ENCODE measurements at regions of chr16 and their contacts with region 1.

Region 1: DNA sequence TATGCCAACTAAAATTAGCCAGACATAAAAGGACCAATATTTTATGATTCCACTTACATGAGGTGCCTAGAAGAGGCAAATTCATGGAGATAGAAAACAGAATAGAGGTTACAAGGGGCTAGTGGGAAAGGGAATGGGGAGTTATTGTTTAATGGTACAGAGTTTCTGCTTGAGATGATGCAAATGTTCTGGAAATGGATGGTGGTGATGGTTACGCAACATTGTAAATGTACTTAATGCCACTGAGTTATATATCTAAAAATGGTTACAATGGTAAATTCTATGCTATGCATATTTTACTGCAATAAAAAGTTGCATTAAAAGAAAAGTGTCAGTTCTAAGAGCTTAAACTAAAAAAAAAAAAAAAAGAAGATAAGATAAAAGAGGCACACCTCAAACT is 17.9 kb downstream of the MT1X start:
- DNase-seq: no peak
- ATAC-seq: no peak
- H3K4me3 ChIP-seq: no peak overlapping the region
- H3K27ac ChIP-seq: no peak overlapping the region
- H3K4me1 ChIP-seq: no peaks in the 10 kb centered on the region; the same call in 1 of the 2 replicates
- H3K27me3 ChIP-seq: no peaks in the 10 kb centered on the region; a peak in 2 of 4 replicates
- CTCF ChIP-seq: no peak
- EP300 ChIP-seq: no peak
- POLR2A ChIP-seq: no peak
- RAD21 ChIP-seq: no peak

Region 2: DNA sequence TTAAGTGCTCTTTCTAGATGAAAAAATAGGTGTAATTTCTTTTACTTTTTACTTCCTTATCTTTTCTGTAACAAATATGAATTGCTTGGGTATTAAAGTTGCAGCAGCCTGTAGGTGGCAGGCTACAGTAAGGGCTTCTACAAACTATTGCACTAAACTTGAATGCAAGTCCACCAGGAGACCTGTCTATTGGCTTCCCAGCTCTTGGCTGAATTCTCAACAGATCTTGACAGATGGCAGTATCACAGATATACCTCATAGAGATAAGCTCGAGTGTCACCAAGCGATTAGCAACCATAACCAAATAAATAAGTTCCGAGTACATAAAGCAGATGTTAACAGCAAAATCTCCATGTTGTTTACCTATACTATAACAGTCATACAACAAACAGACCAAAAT is 186.2 kb before region 1 on chr16:
- CTCF ChIA-PET with region 1: interaction called, 27 read pairs
- POLR2A ChIA-PET with region 1: no interaction called
- RAD21 ChIA-PET with region 1: interaction called, 10 read pairs
- SMC1A ChIA-PET with region 1: interaction called, 27 read pairs
- in situ Hi-C with region 1: loop called (anchors 5 kb)
- intact Hi-C with region 1: loop called (anchors 1 kb)
- DNase-seq: peak; percentile 4
- ATAC-seq: peak; percentile 95
- H3K4me3 ChIP-seq: no peak overlapping the region
- H3K27ac ChIP-seq: no peak overlapping the region
- H3K4me1 ChIP-seq: no peaks in the 10 kb centered on the region; the same call in 1 of the 2 replicates
- H3K27me3 ChIP-seq: no peaks in the 10 kb centered on the region
- CTCF ChIP-seq: peak; percentile 56 to 66 (median 64)
- EP300 ChIP-seq: no peak
- POLR2A ChIP-seq: no peak
- RAD21 ChIP-seq: peak; percentile 53

Region 3: GRCh38 chr16:56576585-56577293 is 123.5 kb before region 1 on chr16:
- CTCF ChIA-PET with region 1: interaction called, 90 read pairs
- POLR2A ChIA-PET with region 1: no interaction called
- RAD21 ChIA-PET with region 1: interaction called, 66 read pairs
- SMC1A ChIA-PET with region 1: interaction called, 67 read pairs
- in situ Hi-C with region 1: loop called (anchors 5 kb)
- intact Hi-C with region 1: loop called (anchors 1 kb)
- DNase-seq: peak; percentile 32
- ATAC-seq: peak; percentile 100
- H3K4me3 ChIP-seq: no peak overlapping the region
- H3K27ac ChIP-seq: no peak overlapping the region
- H3K4me1 ChIP-seq: no peaks in the 10 kb centered on the region
- H3K27me3 ChIP-seq: no peaks in the 10 kb centered on the region
- CTCF ChIP-seq: peak; percentile 89 to 96 (median 95)
- EP300 ChIP-seq: no peak
- POLR2A ChIP-seq: no peak
- RAD21 ChIP-seq: peak; percentile 95

Region 4: DNA sequence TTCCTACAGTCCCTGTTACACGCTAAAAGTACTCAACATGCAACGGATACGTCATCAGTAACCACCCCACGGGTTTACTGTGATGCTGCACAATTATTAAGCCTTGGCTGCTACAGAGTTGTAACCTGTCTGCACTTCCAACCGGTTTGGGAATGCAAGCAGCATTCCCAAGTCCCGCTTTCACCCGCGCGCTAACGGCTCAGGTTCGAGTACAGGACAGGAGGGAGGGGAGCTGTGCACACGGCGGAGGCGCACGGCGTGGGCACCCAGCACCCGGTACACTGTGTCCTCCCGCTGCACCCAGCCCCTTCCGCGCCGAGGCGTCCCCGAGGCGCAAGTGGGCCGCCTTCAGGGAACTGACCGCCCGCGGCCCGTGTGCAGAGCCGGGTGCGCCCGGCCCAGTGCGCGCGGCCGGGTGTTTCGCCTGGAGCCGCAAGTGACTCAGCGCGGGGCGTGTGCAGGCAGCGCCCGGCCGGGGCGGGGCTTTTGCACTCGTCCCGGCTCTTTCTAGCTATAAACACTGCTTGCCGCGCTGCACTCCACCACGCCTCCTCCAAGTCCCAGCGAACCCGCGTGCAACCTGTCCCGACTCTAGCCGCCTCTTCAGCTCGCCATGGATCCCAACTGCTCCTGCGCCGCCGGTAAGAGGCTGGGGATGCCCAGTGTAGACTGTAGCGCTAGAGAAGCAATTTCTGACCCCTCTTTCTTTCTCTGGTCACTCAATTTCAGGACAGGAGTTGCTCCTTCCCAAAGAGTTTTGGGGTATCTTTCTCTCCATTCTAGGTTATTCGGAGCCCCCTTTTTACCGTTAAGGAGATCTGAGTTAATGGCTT is 91.9 kb before region 1 on chr16 and contains the start of gene MT2A:
- CTCF ChIA-PET with region 1: interaction called, 77 read pairs
- POLR2A ChIA-PET with region 1: interaction called, 6 read pairs
- RAD21 ChIA-PET with region 1: interaction called, 44 read pairs
- SMC1A ChIA-PET with region 1: interaction called, 22 read pairs
- in situ Hi-C with region 1: no loop called
- intact Hi-C with region 1: no loop called
- DNase-seq: no peak
- ATAC-seq: peak; percentile 93
- H3K4me3 ChIP-seq: peak within 1 kb of the TSS; percentile 70
- H3K27ac ChIP-seq: no peak within 1 kb of the TSS
- H3K4me1 ChIP-seq: peaks cover 25% of the 10 kb centered on the region
- H3K27me3 ChIP-seq: no peaks in the 10 kb centered on the region; a peak in 1 of 4 replicates
- CTCF ChIP-seq: no peak
- EP300 ChIP-seq: no peak
- POLR2A ChIP-seq: peak; percentile 67
- RAD21 ChIP-seq: no peak
- polyA plus RNA-seq, gene MT2A: 56.3 to 75.3 TPM

Region 5: GRCh38 chr16:56662357-56663354 is 37.5 kb before region 1 on chr16:
- CTCF ChIA-PET with region 1: no interaction called
- POLR2A ChIA-PET with region 1: no interaction called
- RAD21 ChIA-PET with region 1: no interaction called
- SMC1A ChIA-PET with region 1: no interaction called
- in situ Hi-C with region 1: no loop called
- intact Hi-C with region 1: no loop called
- DNase-seq: no peak
- ATAC-seq: no peak
- H3K4me3 ChIP-seq: no peak overlapping the region
- H3K27ac ChIP-seq: no peak overlapping the region
- H3K4me1 ChIP-seq: no peaks in the 10 kb centered on the region
- H3K27me3 ChIP-seq: peaks cover 18 to 27% of the 10 kb centered on the region in 2 experiments
- CTCF ChIP-seq: no peak
- EP300 ChIP-seq: no peak
- POLR2A ChIP-seq: no peak
- RAD21 ChIP-seq: no peak

Region 6: GRCh38 chr16:56681939-56682702 is 18.1 kb before region 1 on chr16 and contains the start of gene MT1X:
- CTCF ChIA-PET with region 1: interaction called, 15 read pairs
- POLR2A ChIA-PET with region 1: interaction called, 3 read pairs
- RAD21 ChIA-PET with region 1: interaction called, 6 read pairs
- SMC1A ChIA-PET with region 1: interaction called, 11 read pairs
- in situ Hi-C with region 1: no loop called
- intact Hi-C with region 1: no loop called
- DNase-seq: peak; percentile 7
- ATAC-seq: peak; percentile 100
- H3K4me3 ChIP-seq: peak within 1 kb of the TSS; percentile 76
- H3K27ac ChIP-seq: peak within 1 kb of the TSS; percentile 39; the same call in 1 of the 2 replicates
- H3K4me1 ChIP-seq: peaks cover 12% of the 10 kb centered on the region
- H3K27me3 ChIP-seq: no peaks in the 10 kb centered on the region; a peak in 1 of 4 replicates
- CTCF ChIP-seq: no peak
- EP300 ChIP-seq: no peak
- POLR2A ChIP-seq: peak; percentile 80
- RAD21 ChIP-seq: no peak
- polyA plus RNA-seq, gene MT1X: 45.6 to 51.9 TPM

Region 7: GRCh38 chr16:56789360-56789759 is 89.2 kb after region 1 on chr16:
- CTCF ChIA-PET with region 1: interaction called, 6 read pairs
- POLR2A ChIA-PET with region 1: no interaction called
- RAD21 ChIA-PET with region 1: interaction called, 11 read pairs
- SMC1A ChIA-PET with region 1: interaction called, 11 read pairs
- in situ Hi-C with region 1: no loop called
- intact Hi-C with region 1: no loop called
- DNase-seq: no peak
- ATAC-seq: peak; percentile 69
- H3K4me3 ChIP-seq: no peak overlapping the region
- H3K27ac ChIP-seq: no peak overlapping the region
- H3K4me1 ChIP-seq: no peaks in the 10 kb centered on the region
- H3K27me3 ChIP-seq: no peaks in the 10 kb centered on the region
- CTCF ChIP-seq: peak; percentile 28 to 51 (median 31); a peak in 3 of 6 replicates
- EP300 ChIP-seq: no peak
- POLR2A ChIP-seq: no peak
- RAD21 ChIP-seq: peak; percentile 53

Measured in GM12878 (cell line).